ENCODE measurements at regions of chr17 and their contacts with region 1.

Region 1: DNA sequence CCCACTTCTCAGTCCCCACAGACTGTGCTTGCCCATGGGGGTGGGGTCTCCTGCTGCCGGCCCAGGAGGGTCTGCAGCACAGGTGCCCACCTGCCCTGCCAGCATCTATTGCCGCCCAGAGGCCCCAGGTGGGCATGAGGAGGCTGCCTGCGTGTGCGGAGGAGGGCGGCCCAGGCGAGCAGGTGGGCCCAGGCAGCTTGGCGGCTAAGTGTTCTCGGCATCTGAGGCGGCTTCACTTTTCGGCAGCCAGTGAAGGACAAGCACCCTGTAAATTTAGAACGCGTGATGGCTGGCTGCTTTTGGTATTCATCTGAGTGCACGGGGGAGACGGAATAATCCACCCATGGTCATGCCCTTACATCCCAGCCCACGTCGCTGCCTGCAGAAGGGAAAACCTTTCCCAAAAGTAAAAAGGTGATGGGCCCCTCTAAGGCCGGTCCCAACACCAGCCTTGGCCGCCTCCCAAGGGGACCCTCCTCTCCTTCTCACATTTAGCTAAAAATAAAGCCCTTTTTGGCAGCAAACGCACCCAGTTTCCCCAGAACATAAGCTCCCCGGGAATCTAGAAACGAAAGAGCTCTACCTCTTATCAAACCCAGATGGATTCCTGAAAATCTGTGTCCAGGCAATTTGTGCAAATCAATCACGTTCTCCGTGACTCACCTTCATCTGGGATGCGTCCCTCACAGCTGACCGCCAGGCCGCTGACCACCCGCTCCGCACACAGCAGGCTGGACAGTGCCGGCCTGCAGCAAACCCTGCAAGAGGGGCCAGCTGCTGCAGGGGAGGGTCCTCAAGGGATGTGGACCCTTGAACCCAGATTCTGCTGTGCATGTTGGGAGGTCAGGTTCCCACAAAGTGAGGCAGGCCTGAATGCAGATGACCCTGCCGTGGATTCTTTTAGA is 79.4 kb downstream of the RBFOX3 start:
- DNase-seq: no peak
- H3K4me3 ChIP-seq: no peak overlapping the region
- H3K27ac ChIP-seq: no peak overlapping the region
- H3K4me1 ChIP-seq: no peaks in the 10 kb centered on the region
- H3K27me3 ChIP-seq: no peaks in the 10 kb centered on the region
- CTCF ChIP-seq: no peak

Region 2: GRCh38 chr17:79433379-79433778 is 98.1 kb before region 1 on chr17:
- CTCF ChIA-PET with region 1: no interaction called
- dilution Hi-C with region 1: loop called (anchors 5 kb)
- in situ Hi-C with region 1: no loop called
- intact Hi-C with region 1: no loop called
- DNase-seq: no peak
- H3K4me3 ChIP-seq: no peak overlapping the region
- H3K27ac ChIP-seq: no peak overlapping the region
- H3K4me1 ChIP-seq: no peaks in the 10 kb centered on the region
- H3K27me3 ChIP-seq: no peaks in the 10 kb centered on the region
- CTCF ChIP-seq: no peak

Region 3: DNA sequence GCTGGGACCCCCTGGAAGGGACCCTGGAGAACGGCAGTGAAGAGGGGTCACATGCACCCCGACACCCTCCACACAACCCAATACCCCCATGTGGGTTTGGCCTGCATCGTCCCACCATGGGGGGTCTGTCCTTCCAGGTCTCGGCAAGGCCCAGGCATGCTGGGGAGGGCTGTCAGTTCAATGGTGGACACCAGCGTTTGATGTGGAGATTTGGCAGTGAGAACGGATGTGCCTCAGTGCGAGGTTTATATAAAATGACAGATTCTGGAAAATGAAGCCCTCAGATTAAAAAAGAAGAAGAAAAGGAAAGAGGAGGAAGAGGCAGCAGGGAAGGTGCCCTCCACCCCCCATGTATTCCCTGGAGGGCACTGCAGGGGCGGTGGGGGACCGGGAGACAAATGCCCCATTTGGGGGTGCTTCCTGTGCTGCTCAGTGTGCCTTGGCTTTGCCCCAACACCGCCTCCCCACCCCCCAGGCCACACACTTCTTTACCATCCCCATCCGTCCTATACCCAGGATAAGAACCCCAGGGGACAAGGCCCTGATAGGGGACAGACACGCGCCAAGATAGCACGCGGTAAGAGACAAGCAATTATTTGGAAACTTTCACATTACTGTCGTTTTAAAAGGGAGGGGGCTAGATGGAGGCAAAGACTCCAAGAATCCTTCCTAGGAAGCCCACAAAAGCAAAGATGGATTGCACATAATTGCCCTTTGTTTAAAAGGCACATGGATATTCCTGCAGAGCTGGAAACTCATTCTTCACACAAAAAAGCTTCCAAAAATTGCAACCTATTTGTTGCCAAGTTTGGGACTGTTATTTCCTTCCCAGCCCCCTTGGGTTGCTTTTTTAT is 58.5 kb after region 1 on chr17:
- CTCF ChIA-PET with region 1: no interaction called
- dilution Hi-C with region 1: loop called (anchors 5 kb)
- in situ Hi-C with region 1: no loop called
- intact Hi-C with region 1: no loop called
- DNase-seq: no peak
- H3K4me3 ChIP-seq: no peak overlapping the region
- H3K27ac ChIP-seq: no peak overlapping the region
- H3K4me1 ChIP-seq: no peaks in the 10 kb centered on the region
- H3K27me3 ChIP-seq: no peaks in the 10 kb centered on the region
- CTCF ChIP-seq: no peak